Activated CD8-positive, alpha-beta memory T cell treated with anti-CD3 and anti-CD28 coated beads, Interleukin-2, amount 10 ng/mL, durations not matched to agents 7 days and 5 days (primary cell): ENCODE measurements at regions of chr9 and their contacts with region 1.

Region 1: GRCh38 chr9:72022841-72023240 is 37.6 kb downstream of the C9orf57 start:
- DNase-seq: no peak
- ATAC-seq: no peak
- H3K4me3 Mint-ChIP-seq: no peak overlapping the region
- H3K27ac Mint-ChIP-seq: no peak overlapping the region
- H3K4me1 Mint-ChIP-seq: peaks cover 13% of the 10 kb centered on the region
- H3K27me3 Mint-ChIP-seq: no peaks in the 10 kb centered on the region

Region 2: GRCh38 chr9:71783120-71783530 is 239.7 kb before region 1 on chr9:
- CTCF ChIA-PET with region 1: interaction called, 13 read pairs
- DNase-seq: peak; percentile 94
- ATAC-seq: peak; percentile 93
- H3K4me3 Mint-ChIP-seq: peak overlapping the region; percentile 60
- H3K27ac Mint-ChIP-seq: peak overlapping the region; percentile 99
- H3K4me1 Mint-ChIP-seq: peaks cover 47% of the 10 kb centered on the region
- H3K27me3 Mint-ChIP-seq: no peaks in the 10 kb centered on the region

Region 3: GRCh38 chr9:71812385-71812784 is 210.5 kb before region 1 on chr9:
- CTCF ChIA-PET with region 1: interaction called, 125 read pairs
- DNase-seq: no peak
- ATAC-seq: no peak
- H3K4me3 Mint-ChIP-seq: no peak overlapping the region
- H3K27ac Mint-ChIP-seq: no peak overlapping the region
- H3K4me1 Mint-ChIP-seq: peaks cover 6% of the 10 kb centered on the region
- H3K27me3 Mint-ChIP-seq: no peaks in the 10 kb centered on the region

Region 4: GRCh38 chr9:71819115-71819739 is 203.6 kb before region 1 on chr9:
- CTCF ChIA-PET with region 1: interaction called, 23 read pairs
- DNase-seq: no peak
- ATAC-seq: no peak
- H3K4me3 Mint-ChIP-seq: no peak overlapping the region
- H3K27ac Mint-ChIP-seq: no peak overlapping the region
- H3K4me1 Mint-ChIP-seq: peaks cover 9% of the 10 kb centered on the region
- H3K27me3 Mint-ChIP-seq: no peaks in the 10 kb centered on the region

Region 5: DNA sequence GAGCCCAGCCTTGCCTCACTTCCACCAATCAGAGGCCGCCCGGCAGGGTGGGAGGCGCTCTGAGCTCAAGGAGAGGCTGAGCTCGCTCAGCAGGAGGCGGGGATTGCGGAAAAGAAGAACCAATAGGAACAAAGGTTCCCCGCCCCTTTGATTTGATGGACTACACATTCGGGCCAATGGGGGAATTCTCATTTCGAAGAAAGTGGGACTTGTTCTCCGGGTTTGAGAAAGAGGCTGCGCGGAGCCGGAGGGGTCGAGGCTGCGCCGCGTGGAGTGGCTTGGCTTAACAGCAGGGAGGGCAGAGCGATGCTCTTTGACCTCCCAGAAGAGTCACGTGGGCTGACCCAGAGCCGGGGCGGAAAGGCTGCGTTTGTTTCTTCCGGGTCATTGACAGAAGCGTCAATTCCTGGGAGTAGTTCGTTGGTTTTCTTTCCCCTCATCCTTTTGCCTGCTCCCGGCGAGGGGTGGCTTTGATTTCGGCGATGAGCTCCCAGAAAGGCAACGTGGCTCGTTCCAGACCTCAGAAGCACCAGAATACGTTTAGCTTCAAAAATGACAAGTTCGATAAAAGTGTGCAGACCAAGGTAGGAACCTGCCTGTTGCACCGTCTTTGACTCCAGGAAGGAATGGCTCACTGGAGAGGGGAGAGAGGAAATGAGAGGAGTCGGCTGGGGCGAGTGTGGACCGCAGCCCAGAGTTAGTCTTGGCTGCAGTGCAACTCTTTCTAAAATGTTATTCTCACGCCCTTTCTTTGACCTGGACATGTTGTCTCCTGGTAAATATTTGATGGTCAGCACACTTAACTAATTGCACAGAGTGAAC is 111.4 kb before region 1 on chr9 and contains the start of gene C9orf85:
- CTCF ChIA-PET with region 1: interaction called, 12 read pairs
- DNase-seq: peak; percentile 99
- ATAC-seq: peak; percentile 95
- H3K4me3 Mint-ChIP-seq: peak within 1 kb of the TSS; percentile 95
- H3K27ac Mint-ChIP-seq: peak within 1 kb of the TSS; percentile 99
- H3K4me1 Mint-ChIP-seq: peaks cover 64% of the 10 kb centered on the region
- H3K27me3 Mint-ChIP-seq: no peaks in the 10 kb centered on the region
- total RNA-seq, gene C9orf85: 9.8 to 13.0 TPM

Region 6: GRCh38 chr9:72038890-72039410 is 16.1 kb after region 1 on chr9:
- CTCF ChIA-PET with region 1: interaction called, 42 read pairs
- DNase-seq: peak; percentile 69
- ATAC-seq: peak; percentile 83
- H3K4me3 Mint-ChIP-seq: no peak overlapping the region
- H3K27ac Mint-ChIP-seq: no peak overlapping the region
- H3K4me1 Mint-ChIP-seq: peaks cover 4% of the 10 kb centered on the region
- H3K27me3 Mint-ChIP-seq: peaks cover 20% of the 10 kb centered on the region